Astrocyte of the cerebellum (primary cell): ENCODE measurements at regions of chr10 and their contacts with region 1.

Region 1: DNA sequence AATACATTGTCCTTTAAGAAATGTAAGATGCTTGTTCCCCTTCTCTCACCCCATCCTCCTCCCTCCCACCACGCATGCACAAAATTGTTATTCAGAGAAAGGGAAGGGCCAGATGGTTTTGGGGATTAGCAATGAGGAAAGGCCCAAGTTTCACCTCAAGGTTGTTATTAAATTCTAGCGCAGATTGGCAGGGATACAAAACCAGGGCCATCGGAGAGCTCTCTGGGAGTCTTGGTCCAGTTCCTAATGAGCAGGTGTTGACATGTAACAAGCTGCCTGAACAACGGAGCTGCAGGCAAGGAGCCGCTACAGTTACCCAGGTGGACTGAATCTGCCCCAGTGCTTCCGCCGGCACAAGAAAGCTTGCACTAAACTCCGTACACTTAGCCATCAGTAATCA is 9.7 kb upstream of the ANK3 start:
- DNase-seq: no peak
- H3K4me3 ChIP-seq: no peak overlapping the region
- CTCF ChIP-seq: no peak

Region 2: GRCh38 chr10:60291344-60291930 is 107.9 kb before region 1 on chr10:
- in situ Hi-C with region 1: loop called (anchors 5 kb)
- DNase-seq: no peak
- H3K4me3 ChIP-seq: no peak overlapping the region
- CTCF ChIP-seq: no peak